Kidney (tissue), 22 donors: ENCODE measurements at regions of chr17 and their contacts with region 1.

Region 1: DNA sequence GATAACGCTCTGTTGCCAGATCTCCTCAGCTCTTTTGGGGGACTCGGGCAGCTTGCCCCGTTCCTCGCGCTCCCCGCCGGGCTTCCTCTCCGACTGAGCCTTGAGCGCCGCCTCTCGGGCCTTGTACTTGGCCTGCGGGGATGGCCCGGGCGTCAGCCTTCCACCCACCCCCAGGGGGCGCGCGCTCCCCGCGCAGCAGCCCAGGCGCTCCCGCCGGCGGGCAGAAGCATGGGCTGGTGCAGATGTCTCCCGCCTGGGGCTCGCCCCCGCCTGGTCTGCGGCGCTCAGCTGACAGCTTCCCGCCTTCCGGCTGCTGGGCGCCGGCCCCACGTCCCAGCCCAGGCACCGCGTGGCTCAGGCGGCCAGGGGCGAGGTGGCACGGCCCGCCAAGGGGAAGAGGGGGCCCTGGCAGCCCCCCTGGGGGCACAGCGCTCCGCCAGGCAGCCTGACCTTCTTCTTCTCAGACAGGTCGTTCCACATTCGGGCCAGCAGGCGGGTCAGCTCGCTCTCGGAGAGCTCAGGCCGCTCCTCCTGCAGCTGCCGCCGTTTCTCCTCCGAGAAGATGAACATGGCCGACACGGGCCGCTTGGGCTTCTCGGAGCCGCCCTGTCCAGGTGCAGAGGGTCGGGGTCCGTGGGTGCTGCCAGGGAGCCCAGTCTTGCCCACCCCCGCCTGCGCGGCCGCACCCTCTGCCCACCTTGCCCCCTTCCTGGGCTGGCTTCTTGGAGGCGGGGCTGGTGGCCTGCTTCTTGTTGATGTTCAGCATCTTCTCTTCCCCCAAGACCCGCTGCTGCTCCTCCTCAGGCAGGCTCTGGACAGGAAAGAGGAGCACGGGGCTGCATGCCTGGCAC is 8.9 kb downstream of the UBTF start:
- DNase-seq: peak; percentile 89 to 94 (median 92)
- H3K4me3 ChIP-seq: no peak overlapping the region
- H3K27ac ChIP-seq: no peak overlapping the region
- H3K4me1 ChIP-seq: peaks cover 0 to 5% (median 0%) of the 10 kb centered on the region in 3 donors
- H3K27me3 ChIP-seq: no peaks in the 10 kb centered on the region
- CTCF ChIP-seq: peak; percentile 96

Region 2: GRCh38 chr17:44324571-44325275 is 114.2 kb after region 1 on chr17 and contains the start of gene SLC25A39:
- intact Hi-C with region 1: loop called (anchors 5 kb)
- DNase-seq: peak; percentile 95 to 98 (median 96)
- H3K4me3 ChIP-seq: peak within 1 kb of the TSS; percentile 60 to 80 (median 77)
- H3K27ac ChIP-seq: peak within 1 kb of the TSS; percentile 94 to 97
- H3K4me1 ChIP-seq: peaks cover 0 to 14% (median 0%) of the 10 kb centered on the region in 3 donors
- H3K27me3 ChIP-seq: no peaks in the 10 kb centered on the region
- CTCF ChIP-seq: peak; percentile 10
- total RNA-seq, gene SLC25A39: 107 TPM